ENCODE measurements at regions of chr18 and their contacts with region 1.

Region 1: DNA sequence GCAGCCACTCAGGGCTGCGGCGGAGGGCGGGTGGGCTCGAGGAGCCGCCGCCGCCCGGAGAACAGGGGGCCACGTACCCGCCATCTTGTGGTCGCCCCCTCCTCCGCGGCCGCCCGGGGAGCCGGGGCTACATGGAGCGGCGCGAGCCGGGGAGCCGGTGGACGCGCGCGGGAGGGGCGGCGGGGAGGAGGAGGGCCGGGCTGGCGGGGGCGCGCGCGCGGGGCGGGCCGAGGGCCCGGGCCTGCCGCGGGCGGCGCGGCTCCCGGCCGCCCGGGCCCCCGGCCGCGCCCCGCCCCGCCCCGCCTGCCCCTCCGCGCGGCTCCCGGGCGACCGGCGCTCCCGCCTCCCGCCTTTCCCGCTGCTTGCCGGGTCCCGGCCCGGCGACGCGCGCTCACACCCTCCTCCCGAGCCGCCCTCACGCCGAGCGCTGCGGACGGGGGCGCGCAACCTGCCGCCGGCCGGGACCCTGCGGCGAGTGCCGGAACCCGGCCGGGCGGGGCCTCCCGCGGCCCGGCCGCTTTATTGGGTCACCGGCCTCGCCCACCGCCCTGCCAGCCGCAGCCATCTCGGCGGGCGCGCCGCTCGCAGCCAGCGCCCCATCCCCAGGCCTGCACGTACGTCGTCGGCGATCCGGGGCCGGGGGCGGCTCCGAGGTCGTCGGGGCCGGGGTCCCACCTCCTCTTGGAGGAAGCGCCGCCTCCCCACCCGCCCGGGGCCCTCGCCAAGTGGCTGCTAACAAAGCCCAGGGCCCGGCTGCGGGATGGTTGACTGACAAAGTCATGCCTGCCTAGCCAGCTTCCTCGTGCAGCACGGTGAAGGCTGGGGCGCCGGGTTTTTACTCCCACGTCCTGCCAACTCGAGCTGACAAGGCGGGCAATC is at the start of gene PPP4R1:
- DNase-seq: peak; percentile 58
- H3K4me3 Mint-ChIP-seq: peak within 1 kb of the TSS; percentile 93
- H3K27ac Mint-ChIP-seq: peak within 1 kb of the TSS; percentile 77
- H3K4me1 Mint-ChIP-seq: peaks cover 42% of the 10 kb centered on the region
- H3K27me3 Mint-ChIP-seq: peaks cover 27% of the 10 kb centered on the region
- total RNA-seq, gene PPP4R1: 44.3 and 48.8 TPM in 2 replicates

Region 2: DNA sequence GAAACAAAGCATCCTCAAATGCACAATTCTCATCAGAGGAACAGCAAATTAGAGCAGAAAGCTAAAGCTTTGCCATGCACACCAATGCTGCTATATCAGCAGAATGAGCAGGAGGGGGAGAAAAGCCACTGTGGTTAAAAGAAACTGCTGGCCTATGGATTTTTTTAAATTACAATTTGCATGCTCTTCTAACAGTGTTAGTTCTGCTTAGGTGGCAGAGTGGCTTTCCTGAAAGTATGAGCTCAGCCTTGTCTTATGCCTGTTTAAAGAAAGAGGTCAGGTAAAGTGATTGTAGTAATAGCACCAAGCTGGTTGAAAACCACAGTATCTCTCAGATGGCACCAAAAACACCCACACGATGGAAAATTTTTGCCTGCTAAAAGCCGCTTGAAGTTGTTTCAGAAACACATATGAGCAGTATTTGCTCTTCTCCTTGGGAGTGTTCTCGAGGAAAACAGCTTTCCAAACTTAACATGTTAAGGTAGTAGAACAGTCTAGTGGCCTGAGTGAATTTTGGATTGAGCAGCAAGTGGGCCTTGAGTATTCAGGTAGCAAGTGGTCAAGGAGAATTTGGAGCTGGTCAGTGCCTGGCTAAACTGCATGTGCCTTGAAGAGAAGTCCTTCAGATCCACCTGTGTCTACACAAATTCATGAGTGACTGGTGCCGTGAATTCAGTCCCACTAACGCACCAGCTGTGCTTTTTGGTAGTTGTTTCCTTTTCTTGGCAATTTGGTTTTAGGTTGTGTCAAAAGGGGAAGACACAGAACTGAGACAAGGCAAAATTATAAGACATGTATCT is 531.7 kb before region 1 on chr18:
- intact Hi-C with region 1: loop called (anchors 10 kb)
- DNase-seq: peak; percentile 49
- H3K4me3 Mint-ChIP-seq: peak overlapping the region; percentile 72
- H3K27ac Mint-ChIP-seq: peak overlapping the region; percentile 99
- H3K4me1 Mint-ChIP-seq: peaks cover 50% of the 10 kb centered on the region
- H3K27me3 Mint-ChIP-seq: no peaks in the 10 kb centered on the region

Region 3: GRCh38 chr18:9334329-9334972 is 280.2 kb before region 1 on chr18 and contains the start of gene TWSG1:
- intact Hi-C with region 1: loop called (anchors 5 kb)
- DNase-seq: peak; percentile 89
- H3K4me3 Mint-ChIP-seq: peak within 1 kb of the TSS; percentile 84
- H3K27ac Mint-ChIP-seq: peak within 1 kb of the TSS; percentile 65
- H3K4me1 Mint-ChIP-seq: peaks cover 19% of the 10 kb centered on the region
- H3K27me3 Mint-ChIP-seq: peaks cover 25% of the 10 kb centered on the region
- total RNA-seq, gene TWSG1: 12.1 and 12.9 TPM in 2 replicates

Region 4: GRCh38 chr18:9708057-9708433 is 93.4 kb after region 1 on chr18 and contains the start of gene RAB31:
- intact Hi-C with region 1: loop called (anchors 10 kb)
- DNase-seq: no peak
- H3K4me3 Mint-ChIP-seq: peak within 1 kb of the TSS; percentile 77
- H3K27ac Mint-ChIP-seq: no peak within 1 kb of the TSS
- H3K4me1 Mint-ChIP-seq: peaks cover 29% of the 10 kb centered on the region
- H3K27me3 Mint-ChIP-seq: peaks cover 79% of the 10 kb centered on the region
- total RNA-seq, gene RAB31: 0.73 and 0.80 TPM in 2 replicates

Region 5: DNA sequence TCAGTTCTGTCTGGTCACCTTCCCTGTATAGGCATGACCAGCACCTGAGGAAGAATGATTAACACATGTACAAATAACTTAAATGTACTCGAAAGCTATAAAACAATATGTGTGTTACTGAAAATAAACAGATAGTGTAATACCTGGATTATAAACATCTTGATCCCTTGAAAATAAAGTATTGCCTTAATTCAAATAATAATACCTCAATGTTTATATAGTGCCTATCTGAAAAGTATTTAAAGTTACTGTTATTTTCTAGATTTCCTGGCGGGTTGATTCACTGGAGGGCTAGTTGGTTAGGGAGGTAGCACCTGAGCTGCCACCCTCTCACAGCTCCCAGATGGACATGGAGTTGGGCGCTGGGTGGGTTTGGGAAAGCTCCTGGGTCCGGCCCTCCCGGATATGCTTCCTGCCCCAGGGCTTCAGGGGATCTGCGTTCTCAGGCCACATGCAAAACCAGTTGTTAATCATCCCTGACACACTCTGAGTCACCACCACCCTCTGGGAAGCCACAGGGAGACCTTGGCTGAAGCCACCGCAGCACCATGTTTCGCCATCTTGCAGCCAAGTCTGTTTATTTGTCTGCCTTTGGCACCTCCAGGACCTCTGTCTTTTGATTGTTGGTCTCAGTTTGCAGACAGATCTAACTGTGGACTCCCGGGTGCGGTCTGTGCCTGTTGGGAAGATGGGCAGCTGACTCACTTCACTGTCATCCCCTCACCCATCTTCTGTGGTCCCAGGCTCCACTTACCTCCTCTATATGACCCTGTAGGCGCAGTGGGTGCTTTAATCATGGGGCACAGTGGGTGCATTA is 128.8 kb after region 1 on chr18:
- intact Hi-C with region 1: no loop called
- DNase-seq: no peak
- H3K4me3 Mint-ChIP-seq: no peak overlapping the region
- H3K27ac Mint-ChIP-seq: no peak overlapping the region
- H3K4me1 Mint-ChIP-seq: no peaks in the 10 kb centered on the region
- H3K27me3 Mint-ChIP-seq: peaks cover 40% of the 10 kb centered on the region

Region 6: DNA sequence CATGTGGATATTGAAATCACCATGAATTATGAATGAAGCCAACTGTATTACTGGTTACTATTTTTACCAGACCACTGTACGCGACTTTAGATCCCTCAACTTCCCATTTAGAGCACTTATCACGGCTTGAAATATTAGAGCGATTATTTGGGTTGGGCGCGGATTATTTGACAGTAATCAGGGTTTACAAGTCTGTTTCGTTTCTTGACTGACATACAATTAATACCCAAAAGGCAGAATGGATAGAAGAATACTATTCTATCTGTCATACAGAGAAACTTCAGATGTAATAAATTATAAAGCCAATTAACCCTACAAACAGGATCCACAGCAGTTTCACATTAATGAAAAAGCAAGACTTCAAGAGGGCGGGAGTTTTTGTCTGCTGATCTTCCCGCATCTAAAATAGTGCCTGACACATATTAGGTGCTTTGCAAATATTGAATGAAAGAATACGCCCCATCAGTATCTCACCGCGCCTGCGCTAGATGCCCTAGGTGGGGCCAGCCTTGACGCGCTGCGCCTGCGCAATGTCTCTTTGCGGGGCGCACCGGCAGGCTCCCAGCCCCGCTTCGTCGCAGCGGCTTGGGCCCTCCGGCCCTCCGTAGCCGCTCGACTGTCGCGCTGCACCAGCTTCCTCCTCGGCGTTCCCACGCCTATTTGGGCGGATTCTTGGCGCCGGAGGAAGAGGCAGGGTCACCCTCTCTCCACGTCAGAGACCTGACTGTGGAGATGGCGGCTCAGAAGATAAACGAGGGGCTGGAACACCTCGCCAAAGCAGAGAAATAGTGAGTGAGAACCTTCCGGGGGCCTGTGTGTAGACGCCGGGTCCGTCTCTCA is 911.0 kb after region 1 on chr18 and contains the start of gene NAPG:
- intact Hi-C with region 1: loop called (anchors 2 kb)
- DNase-seq: peak; percentile 91
- H3K4me3 Mint-ChIP-seq: peak within 1 kb of the TSS; percentile 97
- H3K27ac Mint-ChIP-seq: peak within 1 kb of the TSS; percentile 98
- H3K4me1 Mint-ChIP-seq: peaks cover 43% of the 10 kb centered on the region
- H3K27me3 Mint-ChIP-seq: peaks cover 12% of the 10 kb centered on the region
- total RNA-seq, gene NAPG: 35.2 and 35.3 TPM in 2 replicates

Measured in activated T-helper 2 cell treated with anti-CD3 and anti-CD28 coated beads, Interferon-gamma antibody, Interleukin-2, Interleukin-4, amounts not matched to agents 10 μg/mL and 5 μg/mL and 100 μg/mL, durations not matched to agents 14 hours and 24 hours and 36 hours (primary cell).